Heart right ventricle (tissue), 16 donors: ENCODE measurements at regions of chr15 and their contacts with region 1.

Region 1: GRCh38 chr15:69626095-69627066 is 173.8 kb downstream of the RPLP1 start:
- DNase-seq: no peak
- ATAC-seq: no peak
- H3K4me3 ChIP-seq: no peak overlapping the region
- H3K27ac ChIP-seq: no peak overlapping the region
- H3K4me1 ChIP-seq: peaks cover 0 to 6% (median 0%) of the 10 kb centered on the region in 9 donors
- H3K27me3 ChIP-seq: peaks cover 0 to 43% (median 10%) of the 10 kb centered on the region in 7 donors
- CTCF ChIP-seq: no peak

Region 2: DNA sequence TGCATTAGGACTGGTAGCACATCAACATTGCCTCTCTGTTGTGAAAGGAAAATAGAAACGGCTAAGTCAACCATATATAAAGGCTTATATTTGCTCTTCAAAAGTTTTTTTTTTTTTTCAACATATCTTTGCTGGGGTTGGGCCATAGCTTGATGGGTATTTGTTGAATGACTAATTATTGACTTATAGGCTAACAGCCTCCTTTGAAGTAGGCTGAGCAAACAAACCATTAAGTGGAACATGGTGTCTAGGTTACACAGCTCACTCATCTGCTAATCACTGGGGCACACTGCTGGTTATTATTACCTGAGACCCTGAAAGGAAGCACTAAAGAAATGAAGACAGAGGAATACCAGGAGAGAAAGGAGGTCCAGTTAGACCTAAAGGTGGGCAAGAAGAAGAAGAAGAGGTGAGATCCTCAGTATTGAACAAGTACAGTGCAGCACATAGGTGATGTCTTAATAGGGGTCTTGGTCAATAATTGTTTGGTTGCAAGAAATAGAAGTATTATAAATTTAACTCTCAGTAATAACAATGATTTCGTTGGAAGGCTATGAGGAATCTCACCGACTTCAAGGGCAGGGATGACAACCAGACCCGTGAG is 34.4 kb before region 1 on chr15:
- intact Hi-C with region 1: no loop called
- DNase-seq: no peak
- ATAC-seq: no peak
- H3K4me3 ChIP-seq: no peak overlapping the region
- H3K27ac ChIP-seq: no peak overlapping the region
- H3K4me1 ChIP-seq: peaks cover 18 to 36% (median 28%) of the 10 kb centered on the region in 9 donors
- H3K27me3 ChIP-seq: peaks cover 0 to under 1% (median 0%) of the 10 kb centered on the region in 7 donors
- CTCF ChIP-seq: no peak

Region 3: GRCh38 chr15:69658411-69658945 is 32.1 kb after region 1 on chr15:
- intact Hi-C with region 1: loop called in 1 of 10 experiments (anchors 1 kb)
- DNase-seq: no peak
- ATAC-seq: no peak
- H3K4me3 ChIP-seq: no peak overlapping the region
- H3K27ac ChIP-seq: no peak overlapping the region
- H3K4me1 ChIP-seq: peaks cover 0 to 7% (median 0%) of the 10 kb centered on the region in 9 donors
- H3K27me3 ChIP-seq: peaks cover 0 to 51% (median 32%) of the 10 kb centered on the region in 7 donors
- CTCF ChIP-seq: no peak

Region 4: DNA sequence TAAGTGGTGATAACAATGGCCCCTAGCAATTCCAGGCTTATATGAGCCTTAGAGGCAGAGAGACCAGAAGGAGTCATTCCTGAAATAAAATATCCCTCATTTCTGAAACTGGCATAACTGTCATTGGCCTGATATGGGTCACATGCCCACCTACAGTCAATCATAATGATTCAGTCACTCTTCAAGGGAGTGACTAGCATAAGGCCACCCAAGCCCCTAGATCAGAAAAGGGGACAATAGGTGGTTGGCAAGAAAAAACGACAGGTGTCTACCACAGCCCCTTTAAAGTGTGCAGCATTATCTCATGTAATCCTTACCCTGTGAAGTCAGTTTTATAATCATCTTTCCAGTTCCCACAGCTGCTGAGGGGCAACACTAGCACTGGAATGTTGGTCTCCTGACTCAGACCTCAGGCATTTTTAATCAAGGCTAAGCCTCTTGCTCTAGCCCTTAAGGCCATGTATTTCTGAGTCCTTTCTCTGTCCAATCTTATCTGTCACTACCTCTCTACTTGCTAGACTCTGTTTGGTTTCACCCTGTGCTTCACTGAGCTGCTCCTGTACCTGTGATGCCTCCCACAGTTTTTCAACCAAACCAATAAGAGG is 299.5 kb after region 1 on chr15:
- intact Hi-C with region 1: no loop called
- DNase-seq: no peak
- ATAC-seq: no peak
- H3K4me3 ChIP-seq: no peak overlapping the region
- H3K27ac ChIP-seq: no peak overlapping the region
- H3K4me1 ChIP-seq: peaks cover 0 to 12% (median 0%) of the 10 kb centered on the region in 9 donors
- H3K27me3 ChIP-seq: no peaks in the 10 kb centered on the region
- CTCF ChIP-seq: no peak